A673 (cell line): ENCODE measurements at regions of chr4 and their contacts with region 1.

Region 1: GRCh38 chr4:95693594-95693993 is 144.8 kb upstream of the UNC5C start:
- DNase-seq: peak; percentile 42
- H3K4me3 ChIP-seq: no peak overlapping the region
- H3K27ac ChIP-seq: no peak overlapping the region
- H3K4me1 ChIP-seq: no peaks in the 10 kb centered on the region
- H3K27me3 ChIP-seq: no peaks in the 10 kb centered on the region
- CTCF ChIP-seq: peak; percentile 49

Region 2: DNA sequence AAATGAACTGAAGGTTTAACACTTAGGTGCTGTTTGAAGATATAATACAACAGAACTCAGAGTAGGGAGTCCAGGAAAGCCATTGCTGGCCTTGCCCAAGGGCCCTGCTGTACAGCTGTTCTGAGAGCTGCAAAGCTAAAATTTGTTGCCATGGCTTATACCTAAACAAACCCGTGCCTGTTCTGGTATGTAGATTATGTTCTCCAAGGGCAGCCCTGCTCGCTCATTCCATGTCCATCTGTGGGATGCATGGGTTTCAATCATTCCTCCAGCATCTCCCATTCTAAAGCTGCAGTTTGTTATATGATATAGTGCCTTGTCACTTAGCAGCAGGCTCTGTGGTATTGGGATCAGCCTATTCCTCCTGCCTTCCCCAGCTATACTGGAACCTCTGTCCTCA is 1016.6 kb before region 1 on chr4:
- CTCF ChIA-PET with region 1: no interaction called
- POLR2A ChIA-PET with region 1: no interaction called
- intact Hi-C with region 1: no loop called
- DNase-seq: no peak
- H3K4me3 ChIP-seq: no peak overlapping the region
- H3K27ac ChIP-seq: no peak overlapping the region
- H3K4me1 ChIP-seq: no peaks in the 10 kb centered on the region
- H3K27me3 ChIP-seq: no peaks in the 10 kb centered on the region
- CTCF ChIP-seq: no peak

Region 3: DNA sequence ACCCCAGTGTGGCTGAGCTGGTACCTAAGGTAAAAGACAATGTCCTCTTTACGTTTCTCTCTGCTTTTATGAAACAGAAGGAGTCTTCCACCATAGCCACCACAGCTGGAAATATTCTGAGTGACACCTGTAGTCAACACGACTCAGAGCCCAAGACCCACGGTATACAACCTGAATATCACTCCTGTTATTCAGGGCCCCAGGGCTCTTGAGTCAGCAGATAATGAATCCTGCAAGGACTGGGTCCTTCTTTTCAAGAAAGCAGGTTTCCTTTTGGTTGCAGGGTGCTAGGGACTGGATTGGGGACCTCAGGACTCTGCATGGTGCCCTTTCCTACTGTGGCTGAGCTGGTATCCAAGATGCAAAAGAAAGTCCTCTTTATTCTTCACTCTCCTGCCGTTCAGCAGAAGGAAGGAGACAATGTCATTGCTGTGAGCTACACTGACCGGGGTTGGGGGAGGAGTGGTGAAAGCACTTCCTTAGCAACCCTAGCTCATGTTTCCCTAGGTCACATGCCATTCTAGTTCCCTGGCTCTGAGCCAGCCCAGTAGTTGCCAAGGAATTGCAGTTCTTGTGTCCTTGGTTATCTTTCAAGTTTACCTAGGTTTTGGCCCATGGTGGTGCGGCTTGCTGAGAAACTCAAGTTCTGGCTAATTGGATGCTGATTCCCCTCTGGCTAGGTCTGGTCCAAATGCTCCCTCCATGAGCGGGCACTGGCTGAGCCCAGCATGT is 121.1 kb before region 1 on chr4:
- CTCF ChIA-PET with region 1: no interaction called
- POLR2A ChIA-PET with region 1: no interaction called
- intact Hi-C with region 1: no loop called
- DNase-seq: peak; percentile 9
- H3K4me3 ChIP-seq: no peak overlapping the region
- H3K27ac ChIP-seq: no peak overlapping the region
- H3K4me1 ChIP-seq: no peaks in the 10 kb centered on the region
- H3K27me3 ChIP-seq: no peaks in the 10 kb centered on the region
- CTCF ChIP-seq: no peak

Region 4: GRCh38 chr4:96352051-96352517 is 658.5 kb after region 1 on chr4:
- CTCF ChIA-PET with region 1: no interaction called
- POLR2A ChIA-PET with region 1: no interaction called
- intact Hi-C with region 1: loop called (anchors 10 kb)
- DNase-seq: peak; percentile 22
- H3K4me3 ChIP-seq: no peak overlapping the region
- H3K27ac ChIP-seq: no peak overlapping the region
- H3K4me1 ChIP-seq: no peaks in the 10 kb centered on the region
- H3K27me3 ChIP-seq: no peaks in the 10 kb centered on the region
- CTCF ChIP-seq: peak; percentile 45; the same call in 1 of the 2 replicates